Caco-2 (cell line): ENCODE measurements at regions of chr14 and their contacts with region 1.

Region 1: DNA sequence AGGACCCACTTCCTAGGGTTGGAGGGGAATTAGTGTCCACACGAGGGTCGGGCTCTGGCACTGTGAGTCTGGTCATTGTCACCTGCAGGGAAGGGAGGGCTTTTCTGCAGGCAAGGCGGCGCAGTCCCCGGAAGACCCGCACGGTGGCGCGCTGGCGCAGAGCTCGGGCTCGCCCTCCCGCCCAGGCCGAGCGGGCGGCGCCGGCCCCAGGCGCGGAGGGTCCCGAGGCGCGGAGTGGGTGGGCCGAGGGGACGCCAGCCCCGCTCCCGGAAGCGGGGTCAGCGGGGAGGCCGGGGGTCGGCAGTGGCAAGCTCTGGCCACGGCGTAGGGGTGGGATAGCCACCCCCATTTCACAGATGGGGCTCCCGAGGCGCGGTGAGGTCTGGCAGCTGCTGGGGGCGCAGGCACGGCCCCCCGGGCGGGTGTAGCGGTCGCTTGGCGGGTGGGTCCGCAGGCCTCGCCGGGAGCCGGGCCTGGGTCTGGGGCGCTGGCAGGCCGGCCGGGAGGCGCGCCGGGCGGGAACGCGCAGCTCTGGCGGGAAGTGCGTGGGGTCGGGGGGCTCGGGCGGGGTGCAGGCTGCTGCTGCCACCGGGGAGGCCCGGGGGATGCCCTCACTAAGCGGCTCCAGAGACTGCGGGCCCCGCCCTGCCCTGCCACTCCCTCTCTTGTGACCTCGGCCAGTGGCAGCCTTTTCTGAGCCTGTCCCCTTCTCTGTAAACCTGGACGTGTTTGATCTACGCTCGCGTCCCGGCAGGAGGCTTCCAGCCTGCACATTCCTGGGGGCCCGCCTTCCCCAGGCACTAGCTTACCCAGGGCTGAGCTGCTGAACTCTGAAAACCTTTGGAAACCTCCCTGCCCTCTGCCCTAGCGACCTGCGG is 46.1 kb downstream of the CYP46A1 start:
- DNase-seq: peak; percentile 92 to 94
- H3K4me3 ChIP-seq: peak overlapping the region; percentile 63
- H3K4me3 Mint-ChIP-seq: peak overlapping the region; percentile 72
- H3K27ac Mint-ChIP-seq: peak overlapping the region; percentile 53
- H3K4me1 ChIP-seq: peaks cover 10% of the 10 kb centered on the region
- H3K4me1 Mint-ChIP-seq: no peaks in the 10 kb centered on the region
- H3K27me3 ChIP-seq: no peaks in the 10 kb centered on the region
- H3K27me3 Mint-ChIP-seq: no peaks in the 10 kb centered on the region
- CTCF ChIP-seq: peak; percentile 78 to 92

Region 2: GRCh38 chr14:99524804-99525698 is 205.2 kb before region 1 on chr14:
- CTCF ChIA-PET with region 1: no interaction called
- POLR2A ChIA-PET with region 1: no interaction called
- intact Hi-C with region 1: loop called (anchors 5 kb)
- DNase-seq: peak; percentile 62 to 69
- H3K4me3 ChIP-seq: no peak overlapping the region
- H3K4me3 Mint-ChIP-seq: no peak overlapping the region
- H3K27ac Mint-ChIP-seq: peak overlapping the region; percentile 84
- H3K4me1 ChIP-seq: peaks cover 47% of the 10 kb centered on the region
- H3K4me1 Mint-ChIP-seq: peaks cover 8% of the 10 kb centered on the region
- H3K27me3 ChIP-seq: no peaks in the 10 kb centered on the region
- H3K27me3 Mint-ChIP-seq: no peaks in the 10 kb centered on the region
- CTCF ChIP-seq: peak; percentile 23 to 28

Region 3: GRCh38 chr14:99779751-99780150 is 49.5 kb after region 1 on chr14:
- CTCF ChIA-PET with region 1: interaction called, 15 read pairs
- POLR2A ChIA-PET with region 1: interaction called, 8 read pairs
- intact Hi-C with region 1: loop called (anchors 1 kb)
- DNase-seq: no peak
- H3K4me3 ChIP-seq: no peak overlapping the region
- H3K4me3 Mint-ChIP-seq: no peak overlapping the region
- H3K27ac Mint-ChIP-seq: no peak overlapping the region
- H3K4me1 ChIP-seq: peaks cover 11% of the 10 kb centered on the region
- H3K4me1 Mint-ChIP-seq: peaks cover 12% of the 10 kb centered on the region
- H3K27me3 ChIP-seq: no peaks in the 10 kb centered on the region
- H3K27me3 Mint-ChIP-seq: peaks cover 17% of the 10 kb centered on the region
- CTCF ChIP-seq: no peak

Region 4: GRCh38 chr14:99809360-99809759 is 79.1 kb after region 1 on chr14:
- CTCF ChIA-PET with region 1: no interaction called
- POLR2A ChIA-PET with region 1: no interaction called
- intact Hi-C with region 1: loop called (anchors 5 kb)
- DNase-seq: no peak
- H3K4me3 ChIP-seq: no peak overlapping the region
- H3K4me3 Mint-ChIP-seq: no peak overlapping the region
- H3K27ac Mint-ChIP-seq: no peak overlapping the region
- H3K4me1 ChIP-seq: no peaks in the 10 kb centered on the region
- H3K4me1 Mint-ChIP-seq: no peaks in the 10 kb centered on the region
- H3K27me3 ChIP-seq: no peaks in the 10 kb centered on the region
- H3K27me3 Mint-ChIP-seq: peaks cover 4% of the 10 kb centered on the region
- CTCF ChIP-seq: no peak

Region 5: DNA sequence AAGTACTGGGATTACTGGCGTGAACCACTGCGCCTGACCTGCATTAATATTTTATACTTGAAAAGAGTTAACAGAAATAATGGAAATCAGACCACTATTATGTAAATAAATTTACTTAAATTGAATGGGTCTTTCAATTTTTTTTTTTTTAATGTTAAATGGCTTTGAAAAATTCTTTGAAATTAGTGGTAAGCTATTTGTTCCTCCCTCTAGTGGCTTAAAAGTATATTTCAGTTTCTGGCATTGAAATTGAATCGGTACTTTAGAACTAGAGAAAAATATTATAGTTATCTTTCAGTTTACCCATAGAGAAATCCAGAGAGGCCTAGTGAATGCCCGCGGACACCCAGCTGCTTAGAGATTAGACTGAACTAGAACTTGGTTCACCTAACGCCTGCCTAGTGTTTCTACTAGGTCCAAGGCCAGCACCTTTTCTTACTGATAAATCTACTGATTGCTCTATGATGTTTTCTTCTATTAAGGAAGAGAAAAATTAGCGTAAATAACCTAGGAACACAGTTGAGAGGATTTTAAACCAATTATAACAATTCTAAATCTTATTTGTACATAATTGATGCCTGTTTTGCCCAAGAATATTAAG is 169.4 kb after region 1 on chr14:
- CTCF ChIA-PET with region 1: interaction called, 10 read pairs
- POLR2A ChIA-PET with region 1: no interaction called
- intact Hi-C with region 1: no loop called
- DNase-seq: no peak
- H3K4me3 ChIP-seq: no peak overlapping the region
- H3K4me3 Mint-ChIP-seq: no peak overlapping the region
- H3K27ac Mint-ChIP-seq: no peak overlapping the region
- H3K4me1 ChIP-seq: no peaks in the 10 kb centered on the region
- H3K4me1 Mint-ChIP-seq: no peaks in the 10 kb centered on the region
- H3K27me3 ChIP-seq: no peaks in the 10 kb centered on the region
- H3K27me3 Mint-ChIP-seq: no peaks in the 10 kb centered on the region
- CTCF ChIP-seq: peak; percentile 39 to 50